ENCODE measurements at regions of chr7 and their contacts with region 1.

Region 1: DNA sequence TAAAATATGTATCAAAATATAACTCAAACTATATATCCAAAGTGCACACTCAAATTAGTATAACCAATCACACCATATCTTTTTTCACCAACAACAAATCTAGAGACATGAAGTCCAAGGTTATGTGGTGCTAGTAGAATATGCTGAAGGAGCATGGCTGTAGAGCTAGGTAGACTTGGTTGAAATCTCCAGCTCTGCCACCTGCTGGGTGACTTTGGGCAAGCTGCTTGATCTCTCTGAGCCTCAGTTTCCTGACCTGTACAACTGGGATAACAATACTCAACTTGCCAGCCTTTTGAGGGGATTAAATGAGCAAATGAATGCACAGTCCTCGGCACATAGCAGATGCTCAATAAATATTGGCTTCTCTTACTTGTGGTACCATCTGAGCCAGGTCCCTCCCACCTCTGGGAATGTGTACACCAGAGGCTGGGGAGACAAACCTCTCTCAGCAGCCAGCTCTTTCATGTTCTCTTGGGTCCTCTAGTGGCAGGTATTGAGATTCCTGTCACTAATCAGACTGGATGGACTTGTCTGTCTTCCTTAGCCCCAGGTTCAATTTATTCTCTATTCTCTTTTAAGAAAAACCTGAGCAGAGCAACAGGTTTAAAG is 94.2 kb upstream of the PDE1C start:
- DNase-seq: no peak
- ATAC-seq: no peak
- H3K4me3 Mint-ChIP-seq: no peak overlapping the region
- H3K27ac Mint-ChIP-seq: no peak overlapping the region
- H3K4me1 Mint-ChIP-seq: no peaks in the 10 kb centered on the region
- H3K27me3 Mint-ChIP-seq: no peaks in the 10 kb centered on the region

Region 2: GRCh38 chr7:33815336-33815735 is 1650.9 kb after region 1 on chr7:
- CTCF ChIA-PET with region 1: no interaction called
- POLR2A ChIA-PET with region 1: no interaction called
- intact Hi-C with region 1: loop called in 1 of 2 experiments (anchors 5 kb)
- DNase-seq: no peak
- ATAC-seq: no peak
- H3K4me3 Mint-ChIP-seq: no peak overlapping the region
- H3K27ac Mint-ChIP-seq: no peak overlapping the region
- H3K4me1 Mint-ChIP-seq: peaks cover 4% of the 10 kb centered on the region
- H3K27me3 Mint-ChIP-seq: peaks cover 1% of the 10 kb centered on the region